B cell (primary cell): ENCODE measurements at regions of chr6 and their contacts with region 1.

Region 1: GRCh38 chr6:144675231-144675861 is 390.2 kb downstream of the UTRN start:
- DNase-seq: no peak
- ATAC-seq: no peak
- H3K4me3 ChIP-seq: no peak overlapping the region
- H3K4me3 Mint-ChIP-seq: no peak overlapping the region
- H3K27ac ChIP-seq: no peak overlapping the region
- H3K27ac Mint-ChIP-seq: no peak overlapping the region
- H3K4me1 ChIP-seq: peaks cover 0 to 4% of the 10 kb centered on the region in 2 donors
- H3K4me1 Mint-ChIP-seq: peaks cover 26% of the 10 kb centered on the region
- H3K27me3 ChIP-seq: no peaks in the 10 kb centered on the region
- H3K27me3 Mint-ChIP-seq: no peaks in the 10 kb centered on the region
- CTCF ChIP-seq: no peak

Region 2: GRCh38 chr6:144653885-144654505 is 21.4 kb before region 1 on chr6:
- CTCF ChIA-PET with region 1: interaction called, 6 read pairs
- POLR2A ChIA-PET with region 1: no interaction called
- intact Hi-C with region 1: loop called (anchors 2 kb)
- DNase-seq: peak; percentile 71
- ATAC-seq: peak; percentile 92
- H3K4me3 ChIP-seq: peak overlapping the region in 3 of 5 experiments; percentile 5 to 66 (median 41)
- H3K4me3 Mint-ChIP-seq: peak overlapping the region; percentile 77
- H3K27ac ChIP-seq: peak overlapping the region; percentile 66 to 83
- H3K27ac Mint-ChIP-seq: peak overlapping the region; percentile 84
- H3K4me1 ChIP-seq: peaks cover 27 to 38% of the 10 kb centered on the region in 2 donors
- H3K4me1 Mint-ChIP-seq: peaks cover 59% of the 10 kb centered on the region
- H3K27me3 ChIP-seq: no peaks in the 10 kb centered on the region
- H3K27me3 Mint-ChIP-seq: no peaks in the 10 kb centered on the region
- CTCF ChIP-seq: no peak